Activated naive CD8-positive, alpha-beta T cell treated with anti-CD3 and anti-CD28 coated beads, Interleukin-2, amount 10 ng/mL, durations not matched to agents 7 days and 5 days (primary cell): ENCODE measurements at regions of chr14 and their contacts with region 1.

Region 1: DNA sequence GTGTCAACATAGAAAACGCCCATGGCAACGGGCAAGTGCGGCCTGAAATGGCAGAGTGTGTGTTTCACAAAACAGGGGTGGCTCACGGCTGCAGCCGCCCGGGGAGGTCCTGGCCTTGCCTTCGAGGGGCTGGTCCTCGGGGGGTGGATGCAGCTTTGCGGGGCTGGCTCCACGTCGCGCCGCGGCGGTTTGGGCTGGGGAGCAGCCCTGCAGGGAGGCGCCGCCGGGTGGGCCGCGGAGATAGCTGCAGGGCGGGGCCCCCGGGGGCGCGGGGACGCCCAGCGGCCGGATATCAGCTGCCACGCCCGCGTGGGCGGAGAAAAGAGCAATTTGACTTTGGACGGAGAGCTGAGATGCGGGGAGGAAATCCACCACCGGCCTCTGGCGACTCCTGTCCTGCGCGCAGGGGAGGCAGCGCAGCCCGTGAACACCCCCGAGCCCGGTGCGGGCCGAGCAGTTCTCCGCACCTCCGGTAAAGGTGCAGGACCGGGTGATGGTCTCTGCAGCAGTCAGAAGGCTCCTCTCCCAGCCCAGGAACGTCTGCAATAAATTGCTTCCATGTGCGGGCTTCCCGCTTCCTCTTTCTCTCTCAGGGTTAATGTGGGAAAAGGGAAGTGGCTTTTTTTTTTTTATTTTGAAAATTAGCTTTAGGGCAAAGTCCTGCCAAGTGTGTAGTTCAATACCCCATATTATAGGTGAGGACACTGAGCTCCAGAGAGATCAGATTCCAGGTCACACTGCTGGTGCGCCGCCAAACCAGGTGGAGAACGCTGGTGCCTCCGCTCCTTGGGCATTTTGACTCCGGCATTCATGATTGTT is 110.5 kb downstream of the ARF6 start:
- DNase-seq: peak; percentile 90
- ATAC-seq: peak; percentile 31
- H3K4me3 Mint-ChIP-seq: peak overlapping the region; percentile 82
- H3K27ac Mint-ChIP-seq: peak overlapping the region; percentile 95
- H3K4me1 Mint-ChIP-seq: peaks cover 43% of the 10 kb centered on the region
- H3K27me3 Mint-ChIP-seq: no peaks in the 10 kb centered on the region

Region 2: GRCh38 chr14:49867831-49868723 is 135.3 kb before region 1 on chr14:
- POLR2A ChIA-PET with region 1: interaction called, 291 read pairs
- DNase-seq: peak; percentile 94
- ATAC-seq: peak; percentile 93
- H3K4me3 Mint-ChIP-seq: peak overlapping the region; percentile 98
- H3K27ac Mint-ChIP-seq: peak overlapping the region; percentile 98
- H3K4me1 Mint-ChIP-seq: peaks cover 13% of the 10 kb centered on the region
- H3K27me3 Mint-ChIP-seq: no peaks in the 10 kb centered on the region

Region 3: GRCh38 chr14:49898485-49898884 is 104.9 kb before region 1 on chr14:
- POLR2A ChIA-PET with region 1: interaction called, 121 read pairs
- DNase-seq: no peak
- ATAC-seq: no peak
- H3K4me3 Mint-ChIP-seq: peak overlapping the region; percentile 83
- H3K27ac Mint-ChIP-seq: peak overlapping the region; percentile 86
- H3K4me1 Mint-ChIP-seq: peaks cover 26% of the 10 kb centered on the region
- H3K27me3 Mint-ChIP-seq: no peaks in the 10 kb centered on the region

Region 4: GRCh38 chr14:49971156-49972130 is 32.0 kb before region 1 on chr14:
- POLR2A ChIA-PET with region 1: interaction called, 310 read pairs
- DNase-seq: peak; percentile 73
- ATAC-seq: peak; percentile 80
- H3K4me3 Mint-ChIP-seq: peak overlapping the region; percentile 91
- H3K27ac Mint-ChIP-seq: peak overlapping the region; percentile 99
- H3K4me1 Mint-ChIP-seq: peaks cover 50% of the 10 kb centered on the region
- H3K27me3 Mint-ChIP-seq: no peaks in the 10 kb centered on the region

Region 5: DNA sequence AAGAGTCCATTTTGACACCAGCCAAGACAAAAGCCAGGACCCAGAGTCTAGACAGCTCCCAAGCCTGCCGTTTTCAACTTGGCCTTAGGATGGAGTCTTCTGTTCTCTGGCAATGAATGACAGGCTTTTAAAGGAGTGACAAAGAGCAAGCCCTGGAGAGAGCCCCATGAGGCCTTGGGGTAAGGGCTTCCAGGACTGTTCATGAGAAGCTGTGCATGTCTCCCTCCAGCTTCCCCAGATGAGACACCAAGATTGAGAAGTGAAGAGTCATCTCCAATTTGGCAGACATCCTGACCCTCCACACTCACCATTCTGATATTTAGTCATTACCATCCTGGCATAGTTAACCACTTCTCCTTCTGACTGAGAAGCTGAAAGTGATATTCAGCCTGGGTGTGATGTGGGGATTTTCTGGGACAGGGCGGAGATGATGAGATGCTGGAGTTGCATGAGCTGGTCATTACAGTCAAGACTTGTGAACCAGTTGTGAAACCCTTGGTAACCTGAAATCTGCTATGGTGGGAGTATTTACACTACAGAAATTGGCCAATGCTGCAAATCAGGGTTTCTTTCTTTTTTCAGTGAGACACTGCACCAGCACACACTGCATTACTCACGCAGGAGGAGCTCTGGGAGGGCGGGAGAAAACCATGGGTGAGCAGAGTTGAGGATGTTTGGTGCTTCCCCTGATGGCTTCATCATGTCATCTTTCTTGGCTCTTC is 35.1 kb after region 1 on chr14:
- POLR2A ChIA-PET with region 1: interaction called, 85 read pairs
- DNase-seq: no peak
- ATAC-seq: peak; percentile 40
- H3K4me3 Mint-ChIP-seq: peak overlapping the region; percentile 54
- H3K27ac Mint-ChIP-seq: peak overlapping the region; percentile 98
- H3K4me1 Mint-ChIP-seq: peaks cover 53% of the 10 kb centered on the region
- H3K27me3 Mint-ChIP-seq: no peaks in the 10 kb centered on the region

Region 6: GRCh38 chr14:50085570-50086320 is 82.3 kb after region 1 on chr14:
- POLR2A ChIA-PET with region 1: interaction called, 105 read pairs
- DNase-seq: no peak
- ATAC-seq: no peak
- H3K4me3 Mint-ChIP-seq: peak overlapping the region; percentile 69
- H3K27ac Mint-ChIP-seq: peak overlapping the region; percentile 94
- H3K4me1 Mint-ChIP-seq: peaks cover 76% of the 10 kb centered on the region
- H3K27me3 Mint-ChIP-seq: no peaks in the 10 kb centered on the region

Region 7: DNA sequence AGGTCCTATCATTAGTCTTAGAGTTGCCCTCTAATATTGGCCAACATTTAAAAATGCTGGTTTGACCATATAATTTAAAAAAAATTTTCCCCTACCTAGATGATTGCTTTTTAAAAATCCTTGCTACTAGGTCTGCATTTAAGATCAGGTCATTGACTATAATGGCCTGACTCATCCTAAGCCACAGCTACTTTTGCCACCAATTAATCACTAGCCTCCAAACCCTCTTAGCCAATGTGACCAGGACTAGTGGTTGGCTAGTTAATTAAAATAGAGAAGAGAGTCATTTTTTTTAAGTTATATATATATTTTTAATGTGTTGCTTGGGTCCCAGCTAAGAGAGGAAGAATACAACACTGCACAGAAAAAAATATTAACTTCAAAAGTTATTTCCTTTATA is 170.5 kb after region 1 on chr14:
- POLR2A ChIA-PET with region 1: no interaction called
- DNase-seq: no peak
- ATAC-seq: no peak
- H3K4me3 Mint-ChIP-seq: no peak overlapping the region
- H3K27ac Mint-ChIP-seq: no peak overlapping the region
- H3K4me1 Mint-ChIP-seq: no peaks in the 10 kb centered on the region
- H3K27me3 Mint-ChIP-seq: no peaks in the 10 kb centered on the region

Region 8: GRCh38 chr14:50260511-50260910 is 257.1 kb after region 1 on chr14:
- POLR2A ChIA-PET with region 1: no interaction called
- DNase-seq: no peak
- ATAC-seq: peak; percentile 75
- H3K4me3 Mint-ChIP-seq: no peak overlapping the region
- H3K27ac Mint-ChIP-seq: no peak overlapping the region
- H3K4me1 Mint-ChIP-seq: peaks cover 1% of the 10 kb centered on the region
- H3K27me3 Mint-ChIP-seq: no peaks in the 10 kb centered on the region